ENCODE measurements at regions of chr9 and their contacts with region 1.

Region 1: GRCh38 chr9:122122903-122123632 is 30.0 kb upstream of the TTLL11 start:
- DNase-seq: peak; percentile 76 to 85 (median 83)
- H3K4me3 ChIP-seq: no peak overlapping the region
- H3K27ac ChIP-seq: no peak overlapping the region
- H3K4me1 ChIP-seq: peaks cover 0 to 8% (median 0%) of the 10 kb centered on the region in 3 donors
- H3K27me3 ChIP-seq: peaks cover 10% of the 10 kb centered on the region
- CTCF ChIP-seq: peak; percentile 98

Region 2: DNA sequence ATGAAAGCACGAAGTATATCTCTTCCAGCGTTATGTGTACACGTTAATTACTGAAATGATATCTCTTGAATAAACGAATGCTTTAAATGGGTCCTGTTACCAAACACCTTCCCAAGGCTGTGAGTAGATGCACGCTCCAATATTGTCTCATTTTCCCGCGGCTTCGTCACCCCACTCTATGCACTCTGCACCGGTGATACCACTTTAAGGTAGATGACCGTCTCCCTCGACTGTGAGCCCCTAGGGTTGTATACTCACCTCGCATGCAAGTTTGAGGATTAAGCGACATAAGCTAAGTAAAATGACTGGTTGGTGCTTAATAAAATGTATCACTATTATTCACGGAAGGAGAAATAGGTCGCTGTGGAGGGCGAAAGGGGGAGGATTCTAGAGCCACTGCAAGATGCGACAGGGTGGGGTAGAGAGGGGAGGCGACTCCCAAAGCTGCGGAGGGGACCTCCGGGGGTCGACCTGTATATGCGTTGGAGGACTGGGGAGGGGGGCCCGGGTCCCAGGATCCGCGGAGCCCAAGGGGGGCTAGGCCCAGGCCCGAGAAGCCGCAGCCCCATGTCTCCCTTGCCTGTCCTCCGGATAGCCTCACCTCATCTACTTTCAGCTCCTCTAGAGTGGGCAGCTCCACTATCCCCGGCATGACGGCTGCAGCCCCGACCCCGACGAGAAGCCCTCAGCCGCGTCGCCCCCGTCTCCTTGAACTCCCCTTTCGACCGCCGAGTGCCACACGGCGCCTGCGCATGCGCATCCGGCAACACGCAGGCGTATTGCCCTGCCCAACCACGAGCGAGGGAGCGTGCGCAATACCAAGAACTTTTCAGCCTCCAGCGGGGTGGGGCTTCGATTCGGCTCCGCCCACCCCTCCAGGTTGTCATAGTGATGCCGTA is 36.2 kb after region 1 on chr9 and contains the starts of genes MORN5 and NDUFA8:
- intact Hi-C with region 1: no loop called
- DNase-seq: peak; percentile 98 to 99 (median 98)
- H3K4me3 ChIP-seq: peak within 1 kb of the TSS; percentile 96 to 99 (median 97)
- H3K27ac ChIP-seq: peak within 1 kb of the TSS; percentile 66 to 89
- H3K4me1 ChIP-seq: peaks cover 0 to 9% (median 0%) of the 10 kb centered on the region in 3 donors
- H3K27me3 ChIP-seq: no peaks in the 10 kb centered on the region
- CTCF ChIP-seq: no peak
- total RNA-seq, gene MORN5: 1.6 TPM
- total RNA-seq, gene NDUFA8: 42.5 TPM

Region 3: GRCh38 chr9:122350638-122351355 is 227.7 kb after region 1 on chr9:
- intact Hi-C with region 1: loop called (anchors 5 kb)
- DNase-seq: peak; percentile 81 to 90 (median 84)
- H3K4me3 ChIP-seq: no peak overlapping the region
- H3K27ac ChIP-seq: no peak overlapping the region
- H3K4me1 ChIP-seq: peaks cover 0 to 14% (median 8%) of the 10 kb centered on the region in 3 donors
- H3K27me3 ChIP-seq: no peaks in the 10 kb centered on the region
- CTCF ChIP-seq: peak; percentile 98